B cell (primary cell): ENCODE measurements at regions of chr14 and their contacts with region 1.

Region 1: GRCh38 chr14:92951912-92952471 is 29.0 kb downstream of the CHGA start:
- DNase-seq: peak; percentile 82
- ATAC-seq: peak; percentile 96
- H3K4me3 ChIP-seq: no peak overlapping the region
- H3K4me3 Mint-ChIP-seq: no peak overlapping the region
- H3K27ac ChIP-seq: no peak overlapping the region
- H3K27ac Mint-ChIP-seq: no peak overlapping the region
- H3K4me1 ChIP-seq: peaks cover 0 to 5% of the 10 kb centered on the region in 2 donors
- H3K4me1 Mint-ChIP-seq: peaks cover 4% of the 10 kb centered on the region
- H3K27me3 ChIP-seq: no peaks in the 10 kb centered on the region
- H3K27me3 Mint-ChIP-seq: no peaks in the 10 kb centered on the region
- CTCF ChIP-seq: peak; percentile 88

Region 2: GRCh38 chr14:92914087-92914656 is 37.8 kb before region 1 on chr14:
- CTCF ChIA-PET with region 1: no interaction called
- POLR2A ChIA-PET with region 1: no interaction called
- intact Hi-C with region 1: no loop called
- DNase-seq: no peak
- ATAC-seq: no peak
- H3K4me3 ChIP-seq: no peak overlapping the region
- H3K4me3 Mint-ChIP-seq: no peak overlapping the region
- H3K27ac ChIP-seq: no peak overlapping the region
- H3K27ac Mint-ChIP-seq: no peak overlapping the region
- H3K4me1 ChIP-seq: no peaks in the 10 kb centered on the region
- H3K4me1 Mint-ChIP-seq: no peaks in the 10 kb centered on the region
- H3K27me3 ChIP-seq: peaks cover 0 to 9% (median 0%) of the 10 kb centered on the region in 4 experiments
- H3K27me3 Mint-ChIP-seq: peaks cover 21% of the 10 kb centered on the region
- CTCF ChIP-seq: no peak

Region 3: DNA sequence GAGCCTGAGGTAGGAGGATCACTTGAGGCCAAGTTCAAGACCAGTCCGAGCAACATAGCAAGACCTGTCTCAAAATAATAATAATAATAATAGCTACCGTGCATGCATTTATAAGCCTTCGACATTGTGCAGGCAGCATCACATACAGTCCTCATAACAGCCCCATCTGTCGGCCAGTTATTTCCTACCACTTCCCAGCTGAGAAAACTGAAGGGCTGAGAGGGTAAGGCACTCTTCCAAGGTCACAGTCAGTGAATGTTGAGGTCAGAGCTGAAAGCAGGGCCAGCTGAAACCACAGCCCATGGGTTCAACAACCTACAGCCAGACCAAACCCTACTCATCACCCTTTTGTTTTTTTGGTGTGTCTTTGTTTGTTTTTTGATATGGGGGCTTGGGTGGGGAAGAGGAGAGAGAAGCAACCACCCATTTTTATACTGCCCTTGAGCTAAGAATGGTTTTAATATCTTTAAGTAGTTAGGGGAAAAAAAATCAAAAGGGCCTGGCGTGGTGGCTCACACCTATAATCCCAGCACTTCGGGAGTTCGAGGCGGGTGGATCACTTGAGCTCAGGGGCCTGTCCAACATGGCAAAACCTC is 180.6 kb after region 1 on chr14:
- CTCF ChIA-PET with region 1: interaction called, 139 read pairs
- POLR2A ChIA-PET with region 1: no interaction called
- intact Hi-C with region 1: no loop called
- DNase-seq: peak; percentile 46
- ATAC-seq: peak; percentile 54
- H3K4me3 ChIP-seq: no peak overlapping the region
- H3K4me3 Mint-ChIP-seq: no peak overlapping the region
- H3K27ac ChIP-seq: no peak overlapping the region
- H3K27ac Mint-ChIP-seq: no peak overlapping the region
- H3K4me1 ChIP-seq: no peaks in the 10 kb centered on the region
- H3K4me1 Mint-ChIP-seq: no peaks in the 10 kb centered on the region
- H3K27me3 ChIP-seq: peaks cover 0 to 4% (median 0%) of the 10 kb centered on the region in 4 experiments
- H3K27me3 Mint-ChIP-seq: no peaks in the 10 kb centered on the region
- CTCF ChIP-seq: peak; percentile 38

Region 4: DNA sequence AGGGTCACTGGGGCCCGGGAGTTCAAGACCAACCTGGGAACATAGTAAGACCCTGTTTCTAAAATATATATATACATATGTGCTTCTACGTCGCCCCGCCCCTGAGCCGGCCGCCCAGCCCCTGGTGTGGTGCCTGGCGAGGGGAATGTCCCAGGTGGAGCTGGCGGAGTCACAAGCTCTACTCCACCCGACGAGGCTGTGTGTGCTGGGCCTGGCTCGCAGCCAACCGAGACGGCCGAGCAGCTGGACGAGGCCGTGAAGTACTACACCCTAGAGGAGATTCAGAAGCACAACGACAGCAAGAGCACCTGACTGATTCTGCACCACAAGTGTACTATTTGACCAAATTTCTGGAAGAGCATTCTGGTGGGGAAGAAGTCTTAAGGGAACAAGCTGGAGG is 185.9 kb after region 1 on chr14:
- CTCF ChIA-PET with region 1: interaction called, 139 read pairs
- POLR2A ChIA-PET with region 1: no interaction called
- intact Hi-C with region 1: loop called (anchors 1 kb)
- DNase-seq: no peak
- ATAC-seq: no peak
- H3K4me3 ChIP-seq: no peak overlapping the region
- H3K4me3 Mint-ChIP-seq: no peak overlapping the region
- H3K27ac ChIP-seq: no peak overlapping the region
- H3K27ac Mint-ChIP-seq: no peak overlapping the region
- H3K4me1 ChIP-seq: no peaks in the 10 kb centered on the region
- H3K4me1 Mint-ChIP-seq: peaks cover 2% of the 10 kb centered on the region
- H3K27me3 ChIP-seq: no peaks in the 10 kb centered on the region
- H3K27me3 Mint-ChIP-seq: no peaks in the 10 kb centered on the region
- CTCF ChIP-seq: no peak

Region 5: DNA sequence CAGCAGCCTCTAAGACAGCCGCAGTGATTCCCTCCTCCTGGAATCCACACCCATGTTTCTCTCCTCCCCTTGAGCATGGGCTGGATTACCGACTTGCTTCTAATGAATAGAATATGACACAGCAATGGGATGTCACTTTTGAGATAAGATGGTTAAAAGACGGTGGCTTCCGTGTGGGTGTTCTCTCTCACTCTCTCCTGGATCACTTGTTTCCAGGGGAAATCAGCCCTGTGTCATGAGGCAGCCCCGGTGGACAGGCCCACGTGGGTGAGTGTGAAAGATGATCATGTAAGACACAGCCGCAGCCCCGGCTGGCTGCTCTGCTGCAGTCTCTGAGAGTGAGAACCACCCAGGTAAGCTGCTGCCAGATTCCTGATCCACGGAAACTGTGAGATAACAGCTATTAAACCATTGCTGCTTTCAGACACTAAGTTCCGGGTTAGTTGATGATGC is 222.0 kb after region 1 on chr14:
- CTCF ChIA-PET with region 1: interaction called, 10 read pairs
- POLR2A ChIA-PET with region 1: no interaction called
- intact Hi-C with region 1: no loop called
- DNase-seq: no peak
- ATAC-seq: no peak
- H3K4me3 ChIP-seq: no peak overlapping the region
- H3K4me3 Mint-ChIP-seq: no peak overlapping the region
- H3K27ac ChIP-seq: no peak overlapping the region
- H3K27ac Mint-ChIP-seq: no peak overlapping the region
- H3K4me1 ChIP-seq: no peaks in the 10 kb centered on the region
- H3K4me1 Mint-ChIP-seq: no peaks in the 10 kb centered on the region
- H3K27me3 ChIP-seq: no peaks in the 10 kb centered on the region
- H3K27me3 Mint-ChIP-seq: no peaks in the 10 kb centered on the region
- CTCF ChIP-seq: no peak

Region 6: GRCh38 chr14:93219103-93219726 is 267.2 kb after region 1 on chr14:
- CTCF ChIA-PET with region 1: interaction called, 11 read pairs
- POLR2A ChIA-PET with region 1: no interaction called
- intact Hi-C with region 1: loop called (anchors 1 kb)
- DNase-seq: peak; percentile 68
- ATAC-seq: peak; percentile 60
- H3K4me3 ChIP-seq: no peak overlapping the region
- H3K4me3 Mint-ChIP-seq: no peak overlapping the region
- H3K27ac ChIP-seq: no peak overlapping the region
- H3K27ac Mint-ChIP-seq: no peak overlapping the region
- H3K4me1 ChIP-seq: no peaks in the 10 kb centered on the region
- H3K4me1 Mint-ChIP-seq: no peaks in the 10 kb centered on the region
- H3K27me3 ChIP-seq: no peaks in the 10 kb centered on the region
- H3K27me3 Mint-ChIP-seq: no peaks in the 10 kb centered on the region
- CTCF ChIP-seq: peak; percentile 84

Region 7: GRCh38 chr14:93619176-93619793 is 667.3 kb after region 1 on chr14:
- CTCF ChIA-PET with region 1: interaction called, 3 read pairs
- POLR2A ChIA-PET with region 1: no interaction called
- intact Hi-C with region 1: loop called (anchors 1 kb)
- DNase-seq: peak; percentile 49
- ATAC-seq: no peak
- H3K4me3 ChIP-seq: no peak overlapping the region
- H3K4me3 Mint-ChIP-seq: no peak overlapping the region
- H3K27ac ChIP-seq: no peak overlapping the region
- H3K27ac Mint-ChIP-seq: no peak overlapping the region
- H3K4me1 ChIP-seq: no peaks in the 10 kb centered on the region
- H3K4me1 Mint-ChIP-seq: no peaks in the 10 kb centered on the region
- H3K27me3 ChIP-seq: peaks cover 0 to 3% (median 0%) of the 10 kb centered on the region in 4 experiments
- H3K27me3 Mint-ChIP-seq: peaks cover 19% of the 10 kb centered on the region
- CTCF ChIP-seq: peak; percentile 73

Region 8: GRCh38 chr14:94136575-94137331 is 1184.8 kb after region 1 on chr14:
- CTCF ChIA-PET with region 1: no interaction called
- POLR2A ChIA-PET with region 1: no interaction called
- intact Hi-C with region 1: loop called (anchors 10 kb)
- DNase-seq: peak; percentile 83
- ATAC-seq: peak; percentile 91
- H3K4me3 ChIP-seq: no peak overlapping the region
- H3K4me3 Mint-ChIP-seq: no peak overlapping the region
- H3K27ac ChIP-seq: no peak overlapping the region
- H3K27ac Mint-ChIP-seq: no peak overlapping the region
- H3K4me1 ChIP-seq: peaks cover 0 to 3% of the 10 kb centered on the region in 2 donors
- H3K4me1 Mint-ChIP-seq: peaks cover 2% of the 10 kb centered on the region
- H3K27me3 ChIP-seq: peaks cover 0 to 10% (median 1%) of the 10 kb centered on the region in 4 experiments
- H3K27me3 Mint-ChIP-seq: peaks cover 27% of the 10 kb centered on the region
- CTCF ChIP-seq: peak; percentile 94